Dorsolateral prefrontal cortex (tissue), 120 donors: ENCODE measurements at regions of chr6 and their contacts with region 1.

Region 1: DNA sequence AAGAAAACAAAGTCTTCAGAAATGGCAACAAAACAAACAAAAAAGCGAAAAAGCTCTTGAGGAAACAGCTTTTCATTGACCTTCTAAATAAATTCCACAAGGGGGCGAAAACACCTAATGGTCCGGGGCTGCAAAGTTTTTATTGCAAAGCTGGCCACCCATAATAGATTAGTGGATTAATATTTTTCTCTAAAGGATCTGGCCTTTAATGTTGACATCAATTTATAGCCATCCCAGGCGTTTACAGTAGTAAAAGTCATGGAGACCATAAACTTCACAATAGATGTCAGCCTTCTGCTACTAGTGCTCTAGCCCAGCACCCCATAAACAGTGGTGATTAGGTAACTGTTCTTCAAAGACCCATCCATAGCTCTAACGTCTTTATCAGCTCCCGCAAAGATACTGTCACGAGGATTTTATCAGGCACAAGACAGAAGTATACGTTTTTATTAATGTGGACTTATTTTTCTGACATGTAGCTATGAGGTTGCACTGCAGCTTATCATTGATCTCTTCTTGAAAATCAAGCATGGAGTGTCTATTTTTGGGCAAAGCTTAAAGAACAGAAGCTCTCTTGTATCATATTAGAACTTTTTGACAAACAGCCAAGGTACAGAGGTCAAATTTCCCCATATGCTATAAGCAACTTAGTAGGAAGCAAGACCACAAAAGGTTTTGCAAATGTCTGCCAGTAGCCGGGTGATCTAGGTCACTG is 4.7 kb downstream of the CITED2 start:
- DNase-seq: peak in 1 of 10 donors; percentile 35
- H3K4me3 ChIP-seq: peak overlapping the region in 53 of 59 donors; percentile 5 to 98 (median 87)
- H3K27ac ChIP-seq: peak overlapping the region in 54 of 59 donors; percentile 18 to 99 (median 82)
- H3K27me3 ChIP-seq: no peaks in the 10 kb centered on the region
- CTCF ChIP-seq: peak; percentile 66 to 89 (median 78)

Region 2: GRCh38 chr6:138817822-138818308 is 551.9 kb before region 1 on chr6:
- intact Hi-C with region 1: loop called (anchors 5 kb)
- DNase-seq: no peak
- H3K4me3 ChIP-seq: no peak overlapping the region
- H3K27ac ChIP-seq: no peak overlapping the region
- H3K27me3 ChIP-seq: no peaks in the 10 kb centered on the region
- CTCF ChIP-seq: no peak

Region 3: GRCh38 chr6:140441256-140441655 is 1071.5 kb after region 1 on chr6:
- intact Hi-C with region 1: loop called in 1 of 2 experiments (anchors 5 kb)
- DNase-seq: peak in 5 of 10 donors; percentile 3 to 47 (median 25)
- H3K4me3 ChIP-seq: no peak overlapping the region
- H3K27ac ChIP-seq: no peak overlapping the region
- H3K27me3 ChIP-seq: no peaks in the 10 kb centered on the region
- CTCF ChIP-seq: peak in 43 of 56 donors; percentile 9 to 64 (median 32)